Activated T-helper 1 cell treated with anti-CD3 and anti-CD28 coated beads, Interleukin-12 subunit alpha, Interleukin-12 subunit beta, Interleukin-2, Interleukin-4 antibody, amounts not matched to agents 30 ng/mL and 10 ng/mL and 1 ng/mL, durations not matched to agents 14 hours and 24 hours and 36 hours (primary cell): ENCODE measurements at regions of chr15 and their contacts with region 1.

Region 1: DNA sequence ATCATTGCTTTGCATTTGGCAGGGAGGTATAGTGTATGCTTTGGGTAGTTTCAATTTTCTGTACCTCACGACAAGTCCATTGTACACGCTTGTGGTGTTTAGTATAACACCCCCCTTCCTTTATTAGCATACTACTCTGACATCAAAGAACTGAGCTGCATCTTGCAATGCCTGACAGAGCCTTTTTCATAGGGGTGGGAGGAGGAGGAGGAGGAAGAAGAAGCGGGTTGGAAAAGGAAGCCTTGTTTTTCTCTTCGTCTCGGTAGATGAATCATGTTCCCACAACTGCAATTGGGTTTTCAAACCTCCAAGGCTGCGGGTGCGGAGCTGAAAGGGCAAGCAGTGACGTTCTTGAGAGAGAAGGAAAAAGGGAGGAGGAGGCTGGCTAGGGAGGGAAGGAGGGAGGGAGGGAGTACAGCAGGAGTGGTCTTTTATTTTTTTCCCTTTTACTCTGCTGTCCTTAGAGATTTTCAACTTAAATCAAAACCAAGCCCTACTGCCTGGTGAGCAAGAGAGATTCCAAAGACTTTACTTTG is 175.7 kb downstream of the KLHL25 start:
- DNase-seq: peak; percentile 42
- H3K4me3 Mint-ChIP-seq: no peak overlapping the region
- H3K27ac Mint-ChIP-seq: no peak overlapping the region
- H3K4me1 Mint-ChIP-seq: peaks cover 22% of the 10 kb centered on the region
- H3K27me3 Mint-ChIP-seq: no peaks in the 10 kb centered on the region

Region 2: GRCh38 chr15:85330901-85331588 is 288.0 kb before region 1 on chr15:
- intact Hi-C with region 1: loop called (anchors 1 kb)
- DNase-seq: peak; percentile 72
- H3K4me3 Mint-ChIP-seq: peak overlapping the region; percentile 88
- H3K27ac Mint-ChIP-seq: peak overlapping the region; percentile 92
- H3K4me1 Mint-ChIP-seq: peaks cover 51% of the 10 kb centered on the region
- H3K27me3 Mint-ChIP-seq: no peaks in the 10 kb centered on the region

Region 3: GRCh38 chr15:85582131-85583079 is 36.6 kb before region 1 on chr15:
- intact Hi-C with region 1: loop called (anchors 1 kb)
- DNase-seq: peak; percentile 67
- H3K4me3 Mint-ChIP-seq: peak overlapping the region; percentile 84
- H3K27ac Mint-ChIP-seq: peak overlapping the region; percentile 95
- H3K4me1 Mint-ChIP-seq: peaks cover 84% of the 10 kb centered on the region
- H3K27me3 Mint-ChIP-seq: no peaks in the 10 kb centered on the region

Region 4: DNA sequence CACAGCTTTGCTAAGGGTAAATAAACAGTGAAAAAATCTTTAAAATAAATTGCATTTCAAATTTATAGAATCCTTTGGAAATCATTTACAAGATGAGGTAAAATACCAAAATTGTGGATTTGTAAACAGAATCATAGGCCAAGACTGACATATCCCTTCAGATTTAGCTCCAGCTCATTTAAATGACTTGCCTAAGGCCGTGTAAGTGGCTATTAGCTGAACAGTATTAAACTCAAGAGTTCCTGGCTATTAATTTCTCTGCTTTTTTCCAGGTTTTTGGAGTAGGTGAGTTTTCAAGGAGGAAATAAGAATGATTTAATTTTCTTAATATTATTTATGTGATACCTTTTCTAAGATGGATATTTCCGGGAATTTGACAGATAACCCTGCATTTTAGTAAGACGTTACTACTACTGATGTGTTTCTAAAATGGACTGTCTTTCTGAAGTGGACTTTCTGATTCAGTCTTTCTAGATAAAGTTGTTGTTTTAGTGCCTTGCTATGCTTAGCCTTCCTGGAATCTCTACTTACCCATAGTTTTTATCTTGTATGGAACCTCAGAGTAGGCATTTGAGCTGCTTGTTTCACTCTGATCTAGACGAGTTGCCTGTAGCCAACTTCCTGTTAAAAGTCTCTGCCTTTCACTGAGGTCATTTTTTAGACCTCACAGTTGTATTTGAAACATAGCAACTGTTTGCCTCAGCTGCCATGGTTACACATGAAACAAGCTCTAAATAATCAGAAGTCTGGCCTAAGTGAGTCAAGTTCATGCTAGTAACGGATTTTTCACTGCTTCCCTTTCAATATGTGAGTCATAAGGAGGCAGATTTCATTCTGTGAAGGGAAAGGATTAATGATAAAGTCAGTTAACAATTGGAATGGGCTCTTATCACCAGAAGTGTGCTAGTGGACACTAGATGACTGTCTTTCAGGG is 48.7 kb after region 1 on chr15:
- intact Hi-C with region 1: loop called (anchors 1 kb)
- DNase-seq: peak; percentile 46
- H3K4me3 Mint-ChIP-seq: peak overlapping the region; percentile 20
- H3K27ac Mint-ChIP-seq: peak overlapping the region; percentile 97
- H3K4me1 Mint-ChIP-seq: peaks cover 22% of the 10 kb centered on the region
- H3K27me3 Mint-ChIP-seq: no peaks in the 10 kb centered on the region

Region 5: DNA sequence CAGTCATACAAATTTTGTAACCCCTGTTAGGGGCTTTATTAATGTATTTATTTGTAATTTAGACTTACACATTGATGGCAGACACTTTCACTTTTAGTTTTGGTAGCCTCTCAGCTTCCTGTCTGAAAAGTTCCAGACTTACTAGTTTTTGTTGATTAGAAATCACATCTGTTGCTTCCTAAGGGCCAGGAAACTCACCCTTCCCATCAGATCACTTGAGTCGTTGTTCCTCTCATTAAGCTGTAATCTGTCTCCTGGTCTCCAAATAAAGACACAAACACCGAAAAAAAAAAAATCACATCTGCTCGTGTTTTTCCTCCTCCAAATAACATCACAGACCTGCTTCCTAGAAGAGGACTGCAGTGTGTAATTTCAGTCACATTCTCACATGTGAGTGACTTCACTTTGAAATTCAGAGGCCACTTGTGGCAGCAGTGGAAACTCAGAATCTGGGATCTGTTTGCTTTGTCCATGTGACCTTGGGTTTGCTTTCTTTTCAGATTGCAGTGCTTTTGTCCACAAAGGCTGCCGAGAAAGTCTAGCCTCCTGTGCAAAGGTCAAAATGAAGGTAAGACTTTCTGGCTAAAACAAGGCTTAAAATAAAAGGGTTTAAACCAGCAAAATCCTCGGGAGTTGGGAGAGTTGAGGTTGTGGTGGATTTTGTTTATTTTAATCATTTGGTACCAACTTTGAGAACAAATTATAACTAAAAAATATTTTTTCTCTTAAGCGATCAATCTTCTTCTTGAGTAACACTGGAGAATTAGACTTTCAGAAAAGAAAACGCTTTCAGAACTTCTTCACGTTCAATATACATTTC is 88.7 kb after region 1 on chr15:
- intact Hi-C with region 1: loop called (anchors 1 kb)
- DNase-seq: no peak
- H3K4me3 Mint-ChIP-seq: peak overlapping the region; percentile 83
- H3K27ac Mint-ChIP-seq: peak overlapping the region; percentile 99
- H3K4me1 Mint-ChIP-seq: peaks cover 88% of the 10 kb centered on the region
- H3K27me3 Mint-ChIP-seq: no peaks in the 10 kb centered on the region

Region 6: DNA sequence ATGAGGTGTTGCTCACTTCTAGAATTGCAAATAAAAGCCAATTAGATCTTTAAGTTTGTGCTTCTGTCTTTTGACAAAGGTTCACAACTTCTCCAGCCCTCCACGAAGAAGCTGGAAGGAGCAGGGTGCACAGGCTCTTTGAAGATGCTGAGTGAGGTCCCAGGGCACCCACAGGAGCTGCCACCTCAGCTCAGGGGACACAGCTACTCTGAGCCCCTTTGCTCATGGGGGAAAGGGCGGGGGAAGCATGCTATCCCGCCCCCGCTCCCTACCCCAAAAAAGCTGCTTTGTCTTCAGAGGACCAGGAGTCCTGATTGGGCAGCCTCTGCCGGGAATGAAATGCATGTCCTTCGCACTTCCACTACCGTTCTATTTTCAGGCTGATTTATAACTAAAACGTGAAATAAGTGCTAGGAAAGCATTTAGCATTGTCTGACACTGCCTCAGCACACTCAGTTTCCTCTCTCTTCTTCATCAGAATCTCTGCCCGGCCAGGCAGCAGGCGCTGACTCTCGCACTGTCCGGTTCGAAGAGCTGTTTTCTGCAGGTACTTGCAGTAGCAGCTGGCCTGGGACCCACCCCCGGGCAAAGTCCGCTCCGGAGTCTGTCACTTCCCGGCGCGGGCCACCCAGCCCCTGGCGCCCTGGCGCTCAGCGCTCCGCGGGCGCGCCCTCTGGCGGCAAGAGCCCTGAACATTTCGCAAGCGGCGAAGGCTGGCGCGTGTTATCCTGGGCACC is 221.2 kb after region 1 on chr15:
- intact Hi-C with region 1: loop called (anchors 10 kb)
- DNase-seq: peak; percentile 76
- H3K4me3 Mint-ChIP-seq: peak overlapping the region; percentile 29
- H3K27ac Mint-ChIP-seq: no peak overlapping the region
- H3K4me1 Mint-ChIP-seq: no peaks in the 10 kb centered on the region
- H3K27me3 Mint-ChIP-seq: peaks cover 7% of the 10 kb centered on the region